Activated CD8-positive, alpha-beta T cell treated with anti-CD3 and anti-CD28 coated beads, Interleukin-2, amount 10 ng/mL, durations not matched to agents 7 days and 5 days (primary cell): ENCODE measurements at regions of chr11 and their contacts with region 1.

Region 1: GRCh38 chr11:47552566-47553416 is at the start of gene CELF1:
- DNase-seq: peak; percentile 94
- ATAC-seq: peak; percentile 93
- H3K4me3 Mint-ChIP-seq: peak within 1 kb of the TSS; percentile 95
- H3K27ac Mint-ChIP-seq: peak within 1 kb of the TSS; percentile 94
- H3K4me1 Mint-ChIP-seq: peaks cover 37% of the 10 kb centered on the region
- H3K27me3 Mint-ChIP-seq: no peaks in the 10 kb centered on the region
- total RNA-seq, gene CELF1: 104 to 111 TPM

Region 2: GRCh38 chr11:47538741-47539574 is 13.8 kb before region 1 on chr11:
- CTCF ChIA-PET with region 1: interaction called, 49 read pairs
- POLR2A ChIA-PET with region 1: interaction called, 3 read pairs
- DNase-seq: no peak
- ATAC-seq: no peak
- H3K4me3 Mint-ChIP-seq: no peak overlapping the region
- H3K27ac Mint-ChIP-seq: no peak overlapping the region
- H3K4me1 Mint-ChIP-seq: peaks cover 35% of the 10 kb centered on the region
- H3K27me3 Mint-ChIP-seq: no peaks in the 10 kb centered on the region

Region 3: DNA sequence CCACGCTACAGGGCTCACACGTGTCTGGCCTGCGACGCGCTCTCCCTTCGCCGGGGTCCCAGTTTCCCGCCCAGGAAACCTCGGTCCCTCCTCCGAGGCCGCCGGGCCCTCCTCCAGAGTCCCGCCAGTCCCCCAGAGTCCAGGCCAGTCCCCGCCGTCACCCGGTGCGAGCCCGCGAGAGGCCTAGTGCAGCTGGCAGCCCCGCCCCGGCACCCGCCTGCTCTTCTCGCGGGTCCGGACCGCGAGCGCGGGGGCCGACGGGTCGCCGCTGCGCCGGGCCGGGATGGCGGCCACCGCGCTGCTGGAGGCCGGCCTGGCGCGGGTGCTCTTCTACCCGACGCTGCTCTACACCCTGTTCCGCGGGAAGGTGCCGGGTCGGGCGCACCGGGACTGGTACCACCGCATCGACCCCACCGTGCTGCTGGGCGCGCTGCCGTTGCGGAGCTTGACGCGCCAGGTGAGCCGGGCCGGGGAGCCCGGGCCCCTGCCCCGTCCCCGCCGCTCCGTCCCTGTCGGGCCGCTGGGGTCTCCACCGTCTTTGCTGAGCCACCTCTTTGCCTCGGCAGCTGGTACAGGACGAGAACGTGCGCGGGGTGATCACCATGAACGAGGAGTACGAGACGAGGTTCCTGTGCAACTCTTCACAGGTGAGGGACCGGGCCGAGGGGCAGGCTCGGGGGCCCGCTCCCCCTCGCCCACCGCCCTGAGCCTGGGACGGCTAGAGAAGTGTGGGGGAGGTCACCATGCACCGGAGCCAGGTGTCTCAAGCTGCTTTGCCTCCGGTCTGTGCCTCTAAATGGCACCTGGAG is 12.8 kb after region 1 on chr11 and contains the start of gene PTPMT1:
- CTCF ChIA-PET with region 1: interaction called, 6 read pairs
- POLR2A ChIA-PET with region 1: interaction called, 33 read pairs
- DNase-seq: peak; percentile 74
- ATAC-seq: peak; percentile 95
- H3K4me3 Mint-ChIP-seq: peak within 1 kb of the TSS; percentile 81
- H3K27ac Mint-ChIP-seq: peak within 1 kb of the TSS; percentile 86
- H3K4me1 Mint-ChIP-seq: peaks cover 24% of the 10 kb centered on the region
- H3K27me3 Mint-ChIP-seq: no peaks in the 10 kb centered on the region
- total RNA-seq, gene PTPMT1: 44.5 to 44.7 TPM

Region 4: GRCh38 chr11:47578524-47579460 is 26.0 kb after region 1 on chr11 and contains the starts of genes KBTBD4 and NDUFS3:
- CTCF ChIA-PET with region 1: interaction called, 15 read pairs
- POLR2A ChIA-PET with region 1: interaction called, 11 read pairs
- DNase-seq: peak; percentile 91
- ATAC-seq: peak; percentile 95
- H3K4me3 Mint-ChIP-seq: peak within 1 kb of the TSS; percentile 100
- H3K27ac Mint-ChIP-seq: peak within 1 kb of the TSS; percentile 95
- H3K4me1 Mint-ChIP-seq: peaks cover 33% of the 10 kb centered on the region
- H3K27me3 Mint-ChIP-seq: no peaks in the 10 kb centered on the region
- total RNA-seq, gene KBTBD4: 17.7 to 20.7 TPM
- total RNA-seq, gene NDUFS3: 114 to 121 TPM